ENCODE measurements at regions of chr20 and their contacts with region 1.

Region 1: DNA sequence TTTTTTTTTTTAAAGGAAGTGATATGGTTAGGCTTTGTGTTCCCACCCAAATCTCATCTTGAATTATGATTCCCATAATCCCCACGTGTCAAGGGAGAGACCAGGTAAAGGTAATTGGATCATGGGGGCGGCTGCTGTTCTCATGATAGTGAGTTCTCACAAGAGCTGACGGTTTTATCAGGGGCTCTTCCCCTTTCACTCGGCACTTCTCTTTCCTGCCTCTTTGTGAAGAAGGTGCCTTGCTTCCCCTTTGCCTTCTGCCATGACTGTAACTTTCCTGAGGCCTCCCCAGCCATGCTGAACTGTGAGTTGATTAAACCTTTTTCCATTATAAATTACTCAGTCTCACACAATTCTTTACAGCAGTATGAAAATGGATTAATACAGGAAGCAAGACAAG is 64.3 kb downstream of the ZFP64 start:
- DNase-seq: no peak
- H3K4me3 ChIP-seq: no peak overlapping the region
- H3K27ac ChIP-seq: no peak overlapping the region
- H3K4me1 ChIP-seq: no peaks in the 10 kb centered on the region
- H3K27me3 ChIP-seq: no peaks in the 10 kb centered on the region
- CTCF ChIP-seq: no peak

Region 2: GRCh38 chr20:52104546-52105441 is 22.5 kb before region 1 on chr20:
- CTCF ChIA-PET with region 1: interaction called, 16 read pairs
- POLR2A ChIA-PET with region 1: interaction called, 6 read pairs
- intact Hi-C with region 1: no loop called
- DNase-seq: peak; percentile 62 to 65
- H3K4me3 ChIP-seq: peak overlapping the region; percentile 81
- H3K27ac ChIP-seq: peak overlapping the region; percentile 71
- H3K4me1 ChIP-seq: peaks cover 19% of the 10 kb centered on the region
- H3K27me3 ChIP-seq: no peaks in the 10 kb centered on the region
- CTCF ChIP-seq: no peak

Region 3: DNA sequence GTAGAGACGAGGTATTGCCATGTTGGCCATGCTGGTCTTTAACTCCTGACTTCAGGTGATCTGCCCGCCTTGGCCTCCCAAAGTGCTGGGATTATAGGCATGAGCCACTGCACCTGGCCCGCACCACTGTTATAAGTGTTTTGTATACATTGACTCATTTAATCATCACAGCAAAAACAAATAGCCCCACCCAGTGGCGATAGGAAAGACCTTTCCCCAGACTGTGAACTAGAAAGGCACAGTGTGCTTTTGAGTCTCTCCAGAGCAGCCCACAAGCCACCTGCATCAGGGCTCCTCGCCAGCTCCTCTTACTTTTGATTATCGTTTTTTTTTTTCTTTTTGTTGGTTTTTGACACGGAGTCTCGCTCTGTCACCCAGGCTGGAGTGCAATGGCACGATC is 92.1 kb after region 1 on chr20:
- CTCF ChIA-PET with region 1: no interaction called
- POLR2A ChIA-PET with region 1: no interaction called
- intact Hi-C with region 1: loop called (anchors 1 kb)
- DNase-seq: peak in 1 of 2 experiments; percentile 53
- H3K4me3 ChIP-seq: no peak overlapping the region
- H3K27ac ChIP-seq: no peak overlapping the region
- H3K4me1 ChIP-seq: no peaks in the 10 kb centered on the region
- H3K27me3 ChIP-seq: peaks cover 48% of the 10 kb centered on the region
- CTCF ChIP-seq: peak; percentile 47; the same call in 1 of the 2 replicates

Region 4: GRCh38 chr20:52379723-52380336 is 252.5 kb after region 1 on chr20:
- CTCF ChIA-PET with region 1: interaction called, 3 read pairs
- POLR2A ChIA-PET with region 1: no interaction called
- intact Hi-C with region 1: loop called (anchors 2 kb)
- DNase-seq: peak in 1 of 2 experiments; percentile 42
- H3K4me3 ChIP-seq: no peak overlapping the region
- H3K27ac ChIP-seq: no peak overlapping the region
- H3K4me1 ChIP-seq: no peaks in the 10 kb centered on the region
- H3K27me3 ChIP-seq: no peaks in the 10 kb centered on the region
- CTCF ChIP-seq: peak; percentile 98

Region 5: DNA sequence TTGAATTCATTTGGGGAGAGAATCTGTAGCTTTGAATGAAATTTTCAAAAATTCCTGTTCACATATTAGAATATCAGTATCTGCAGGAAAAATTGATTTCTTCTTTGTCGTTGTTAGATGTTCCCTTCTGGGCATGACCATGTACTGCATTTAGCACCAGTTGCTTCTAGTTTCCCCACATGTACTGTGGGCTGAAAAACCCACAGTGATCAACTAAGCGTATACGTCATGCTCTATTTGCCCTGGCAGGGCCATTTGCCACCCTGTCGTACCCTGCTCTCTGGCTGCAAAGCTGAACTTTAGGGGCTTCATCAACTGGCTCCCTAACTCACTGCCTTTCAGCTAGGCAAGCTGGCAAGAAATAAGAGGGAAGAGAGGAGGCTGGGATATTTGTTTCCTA is 504.2 kb after region 1 on chr20:
- CTCF ChIA-PET with region 1: interaction called, 10 read pairs
- POLR2A ChIA-PET with region 1: no interaction called
- intact Hi-C with region 1: no loop called
- DNase-seq: peak in 1 of 2 experiments; percentile 8
- H3K4me3 ChIP-seq: no peak overlapping the region
- H3K27ac ChIP-seq: no peak overlapping the region
- H3K4me1 ChIP-seq: no peaks in the 10 kb centered on the region
- H3K27me3 ChIP-seq: no peaks in the 10 kb centered on the region; the same call in 1 of the 2 replicates
- CTCF ChIP-seq: no peak

Region 6: GRCh38 chr20:53216856-53217576 is 1089.7 kb after region 1 on chr20:
- CTCF ChIA-PET with region 1: no interaction called
- POLR2A ChIA-PET with region 1: no interaction called
- intact Hi-C with region 1: loop called (anchors 5 kb)
- DNase-seq: peak in 1 of 2 experiments; percentile 53
- H3K4me3 ChIP-seq: no peak overlapping the region
- H3K27ac ChIP-seq: no peak overlapping the region
- H3K4me1 ChIP-seq: no peaks in the 10 kb centered on the region
- H3K27me3 ChIP-seq: peaks cover 60% of the 10 kb centered on the region
- CTCF ChIP-seq: peak; percentile 94

Region 7: GRCh38 chr20:53547664-53548239 is 1420.4 kb after region 1 on chr20:
- CTCF ChIA-PET with region 1: interaction called, 3 read pairs
- POLR2A ChIA-PET with region 1: no interaction called
- intact Hi-C with region 1: loop called (anchors 5 kb)
- DNase-seq: peak; percentile 12 to 51
- H3K4me3 ChIP-seq: no peak overlapping the region
- H3K27ac ChIP-seq: no peak overlapping the region
- H3K4me1 ChIP-seq: no peaks in the 10 kb centered on the region
- H3K27me3 ChIP-seq: no peaks in the 10 kb centered on the region
- CTCF ChIP-seq: peak; percentile 84